ENCODE measurements at regions of chr6 and their contacts with region 1.

Region 1: GRCh38 chr6:35468181-35468979 is at the start of gene RPL10A:
- H3K4me3 Mint-ChIP-seq: peak within 1 kb of the TSS; percentile 99
- H3K27ac Mint-ChIP-seq: peak within 1 kb of the TSS; percentile 99
- H3K4me1 Mint-ChIP-seq: peaks cover 34% of the 10 kb centered on the region
- H3K27me3 Mint-ChIP-seq: no peaks in the 10 kb centered on the region

Region 2: DNA sequence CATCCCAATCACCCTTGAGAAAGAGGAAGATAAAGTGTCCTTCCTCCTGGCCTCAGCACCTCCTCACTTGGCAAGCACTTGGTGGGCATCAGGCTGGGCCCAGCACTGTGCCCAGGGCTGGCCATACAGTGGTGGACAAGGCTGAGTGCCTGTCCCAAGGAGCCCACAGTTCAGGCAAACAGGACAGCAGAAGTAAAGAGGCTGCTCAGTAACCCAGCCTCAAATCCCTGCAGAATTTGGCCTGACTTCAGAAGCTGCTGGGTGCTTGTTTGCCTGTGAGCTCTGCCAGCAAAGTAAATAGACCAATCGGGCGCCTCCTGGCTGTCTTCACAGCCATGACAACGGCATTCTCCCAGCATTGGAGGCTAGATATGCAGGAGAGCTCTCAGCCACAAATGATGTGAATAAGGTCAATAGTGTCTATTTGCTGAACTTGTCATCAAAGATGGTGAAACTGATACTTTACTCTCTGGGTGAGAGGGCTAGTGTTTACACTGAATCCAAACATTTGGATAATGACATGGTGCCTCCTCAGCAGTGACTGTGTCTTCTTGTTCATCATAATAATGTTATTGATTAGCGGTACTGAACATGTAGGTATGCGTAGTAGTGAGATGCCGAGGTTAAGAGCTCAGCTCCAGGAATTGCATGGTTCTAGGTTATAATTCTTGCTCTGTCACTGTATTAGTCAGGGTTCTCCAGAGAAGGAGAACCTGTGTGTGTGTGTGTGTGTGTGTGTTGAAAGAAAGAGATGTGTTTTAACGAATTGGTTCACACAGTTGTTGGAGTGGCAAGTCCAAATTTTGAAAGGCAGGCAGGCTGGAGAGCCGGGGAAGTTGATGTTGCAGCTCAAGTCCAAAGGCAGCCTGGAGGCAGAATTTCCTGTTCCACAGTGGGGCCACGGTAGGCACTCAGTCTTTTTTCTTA is 53.1 kb before region 1 on chr6:
- intact Hi-C with region 1: no loop called
- H3K4me3 Mint-ChIP-seq: no peak overlapping the region
- H3K27ac Mint-ChIP-seq: peak overlapping the region; percentile 38
- H3K4me1 Mint-ChIP-seq: peaks cover 67% of the 10 kb centered on the region
- H3K27me3 Mint-ChIP-seq: no peaks in the 10 kb centered on the region

Region 3: GRCh38 chr6:35452186-35453090 is 15.9 kb before region 1 on chr6 and contains the start of gene FANCE:
- intact Hi-C with region 1: loop called (anchors 1 kb)
- H3K4me3 Mint-ChIP-seq: peak within 1 kb of the TSS; percentile 85
- H3K27ac Mint-ChIP-seq: peak within 1 kb of the TSS; percentile 26
- H3K4me1 Mint-ChIP-seq: peaks cover 44% of the 10 kb centered on the region
- H3K27me3 Mint-ChIP-seq: peaks cover 20% of the 10 kb centered on the region

Region 4: DNA sequence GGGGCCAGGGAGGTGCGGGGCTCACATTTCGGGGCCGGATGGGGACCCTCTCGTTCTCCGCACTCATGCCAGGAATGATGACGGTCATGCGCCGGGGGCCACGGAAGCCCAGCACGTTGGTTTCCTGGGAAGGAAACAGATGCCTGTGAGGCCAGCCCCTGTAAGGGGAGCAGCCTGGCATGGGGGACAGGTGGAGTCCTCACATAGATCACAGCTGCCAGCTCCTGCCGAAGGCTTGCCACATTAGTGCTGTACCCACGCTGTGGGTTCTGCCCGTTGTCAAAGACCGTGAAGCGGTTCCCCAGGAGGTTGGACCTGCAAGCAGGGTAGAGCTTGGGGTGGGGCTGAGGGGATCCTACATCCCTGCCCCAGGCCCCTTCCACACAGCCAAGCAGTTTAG is 35.2 kb after region 1 on chr6:
- intact Hi-C with region 1: no loop called
- H3K4me3 Mint-ChIP-seq: no peak overlapping the region
- H3K27ac Mint-ChIP-seq: no peak overlapping the region
- H3K4me1 Mint-ChIP-seq: peaks cover 4% of the 10 kb centered on the region
- H3K27me3 Mint-ChIP-seq: peaks cover 83% of the 10 kb centered on the region

Measured in dendritic cell treated with granulocyte-macrophage colony-stimulating factor and Interleukin-4, amounts not matched to agents 40 ng/mL and 50 ng/mL, for 4 days (primary cell).